ENCODE measurements at regions of chr5 and their contacts with region 1.

Region 1: DNA sequence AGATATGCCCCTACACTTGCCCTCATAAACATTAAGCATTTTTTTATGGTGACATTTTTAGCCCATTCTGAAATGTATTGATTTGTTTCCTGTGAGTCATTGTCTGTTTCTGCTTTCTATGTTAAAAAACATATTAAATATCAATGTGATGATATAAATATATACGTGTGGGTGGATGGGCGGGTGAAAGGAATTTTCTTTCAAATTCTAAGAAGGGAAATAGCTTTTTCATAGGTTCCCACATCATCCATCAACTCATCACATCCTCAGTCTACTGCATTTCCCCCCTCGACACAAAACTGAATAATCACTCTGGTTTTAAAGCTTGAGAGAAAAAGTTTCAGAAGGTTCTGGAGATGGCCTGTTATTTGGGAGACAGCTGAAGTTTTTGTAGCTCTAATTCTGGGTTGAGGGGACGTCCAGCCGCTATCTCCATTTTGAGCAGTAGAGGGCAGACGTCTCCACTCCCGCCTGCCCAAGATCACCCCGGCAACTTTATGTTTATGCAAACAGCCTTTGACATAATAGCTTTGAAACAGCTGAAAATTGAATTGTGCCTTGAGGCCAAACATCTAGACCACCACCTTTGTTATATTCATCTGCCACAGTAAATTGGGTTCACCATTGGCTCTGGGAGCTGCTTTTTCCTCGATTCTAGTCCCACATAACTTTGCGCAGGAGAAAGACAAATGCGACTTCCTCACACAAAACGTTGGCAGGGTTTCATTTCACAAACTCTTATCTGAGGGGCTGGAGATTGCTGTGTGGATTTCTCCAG is 216.2 kb upstream of the CLINT1 start:
- DNase-seq: peak; percentile 74
- H3K4me3 Mint-ChIP-seq: peak overlapping the region; percentile 43
- H3K27ac Mint-ChIP-seq: peak overlapping the region; percentile 55
- H3K4me1 Mint-ChIP-seq: peaks cover 8% of the 10 kb centered on the region
- H3K27me3 Mint-ChIP-seq: peaks cover 40% of the 10 kb centered on the region
- CTCF ChIP-seq: peak; percentile 70

Region 2: GRCh38 chr5:158058208-158059120 is 16.7 kb before region 1 on chr5:
- CTCF ChIA-PET with region 1: interaction called, 13 read pairs
- intact Hi-C with region 1: no loop called
- DNase-seq: no peak
- H3K4me3 Mint-ChIP-seq: no peak overlapping the region
- H3K27ac Mint-ChIP-seq: no peak overlapping the region
- H3K4me1 Mint-ChIP-seq: peaks cover 24% of the 10 kb centered on the region
- H3K27me3 Mint-ChIP-seq: peaks cover 34% of the 10 kb centered on the region
- CTCF ChIP-seq: no peak

Region 3: DNA sequence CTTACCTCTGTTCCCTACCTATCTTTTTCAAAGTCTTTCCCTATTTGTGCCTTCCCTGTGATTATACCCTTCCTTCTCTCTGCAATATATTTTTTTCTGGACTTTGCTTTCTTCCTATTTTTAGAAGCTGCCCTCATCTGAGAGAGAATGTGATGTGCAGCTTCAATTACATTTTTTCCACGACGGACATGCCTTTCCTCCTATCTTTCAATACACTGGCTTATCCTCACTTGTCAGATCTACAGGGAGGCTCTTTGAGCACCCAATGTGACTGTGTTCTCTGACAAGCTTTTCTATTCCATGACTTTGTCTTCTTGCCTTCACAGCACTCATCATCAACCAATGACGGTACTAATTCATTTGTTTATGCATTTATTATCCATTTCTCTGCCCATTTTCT is 11.7 kb after region 1 on chr5:
- CTCF ChIA-PET with region 1: interaction called, 10 read pairs
- intact Hi-C with region 1: no loop called
- DNase-seq: no peak
- H3K4me3 Mint-ChIP-seq: no peak overlapping the region
- H3K27ac Mint-ChIP-seq: no peak overlapping the region
- H3K4me1 Mint-ChIP-seq: no peaks in the 10 kb centered on the region
- H3K27me3 Mint-ChIP-seq: no peaks in the 10 kb centered on the region
- CTCF ChIP-seq: no peak